Aorta (tissue), 5 donors: ENCODE measurements at regions of chr1 and their contacts with region 1.

Region 1: GRCh38 chr1:246566128-246566812 is at the starts of genes CNST and TFB2M:
- DNase-seq: peak; percentile 99
- ATAC-seq: peak; percentile 100
- H3K4me3 ChIP-seq: peak within 1 kb of the TSS; percentile 71 to 84
- H3K27ac ChIP-seq: peak within 1 kb of the TSS; percentile 3 to 90
- H3K4me1 ChIP-seq: no peaks in the 10 kb centered on the region
- H3K27me3 ChIP-seq: no peaks in the 10 kb centered on the region
- total RNA-seq, gene CNST: 24.5 to 27.8 TPM
- total RNA-seq, gene TFB2M: 5.2 to 5.6 TPM

Region 2: GRCh38 chr1:246632281-246633087 is 66.2 kb after region 1 on chr1:
- intact Hi-C with region 1: loop called in 1 of 2 experiments (anchors 5 kb)
- DNase-seq: no peak
- ATAC-seq: no peak
- H3K4me3 ChIP-seq: no peak overlapping the region
- H3K27ac ChIP-seq: no peak overlapping the region
- H3K4me1 ChIP-seq: no peaks in the 10 kb centered on the region
- H3K27me3 ChIP-seq: no peaks in the 10 kb centered on the region

Region 3: DNA sequence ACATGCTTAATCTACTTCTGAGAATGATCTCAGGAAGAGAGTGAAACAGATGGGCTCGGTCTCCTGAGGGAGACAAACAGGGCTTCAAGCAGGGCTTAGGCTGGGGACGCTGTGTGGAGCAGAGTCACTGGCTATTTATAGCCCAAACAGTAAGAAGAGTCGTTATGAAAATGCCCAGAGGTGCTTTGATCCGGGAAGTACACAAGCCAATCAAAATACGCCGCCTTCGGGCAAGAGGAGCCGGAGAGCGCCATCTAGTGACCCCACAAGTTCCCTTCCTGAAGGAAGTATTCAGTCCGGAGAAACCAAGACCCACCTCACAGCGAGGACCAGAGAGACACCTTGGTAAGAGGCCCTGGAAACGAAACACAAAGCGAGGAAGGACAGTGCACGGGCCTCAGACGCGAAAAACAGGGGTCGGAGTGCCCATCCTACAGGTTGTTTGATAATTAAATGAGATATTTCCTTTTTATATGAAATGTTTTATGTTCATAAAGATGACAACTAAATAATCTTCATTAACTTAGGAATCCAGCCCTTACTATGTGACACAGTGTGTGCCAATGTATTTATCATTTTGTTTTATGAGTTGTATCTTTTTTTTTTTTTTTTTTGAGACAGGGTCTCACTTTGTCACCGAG is 132.9 kb after region 1 on chr1:
- intact Hi-C with region 1: loop called (anchors 10 kb)
- DNase-seq: peak; percentile 89 to 90
- ATAC-seq: peak; percentile 90
- H3K4me3 ChIP-seq: no peak overlapping the region
- H3K27ac ChIP-seq: no peak overlapping the region
- H3K4me1 ChIP-seq: no peaks in the 10 kb centered on the region
- H3K27me3 ChIP-seq: no peaks in the 10 kb centered on the region

Region 4: DNA sequence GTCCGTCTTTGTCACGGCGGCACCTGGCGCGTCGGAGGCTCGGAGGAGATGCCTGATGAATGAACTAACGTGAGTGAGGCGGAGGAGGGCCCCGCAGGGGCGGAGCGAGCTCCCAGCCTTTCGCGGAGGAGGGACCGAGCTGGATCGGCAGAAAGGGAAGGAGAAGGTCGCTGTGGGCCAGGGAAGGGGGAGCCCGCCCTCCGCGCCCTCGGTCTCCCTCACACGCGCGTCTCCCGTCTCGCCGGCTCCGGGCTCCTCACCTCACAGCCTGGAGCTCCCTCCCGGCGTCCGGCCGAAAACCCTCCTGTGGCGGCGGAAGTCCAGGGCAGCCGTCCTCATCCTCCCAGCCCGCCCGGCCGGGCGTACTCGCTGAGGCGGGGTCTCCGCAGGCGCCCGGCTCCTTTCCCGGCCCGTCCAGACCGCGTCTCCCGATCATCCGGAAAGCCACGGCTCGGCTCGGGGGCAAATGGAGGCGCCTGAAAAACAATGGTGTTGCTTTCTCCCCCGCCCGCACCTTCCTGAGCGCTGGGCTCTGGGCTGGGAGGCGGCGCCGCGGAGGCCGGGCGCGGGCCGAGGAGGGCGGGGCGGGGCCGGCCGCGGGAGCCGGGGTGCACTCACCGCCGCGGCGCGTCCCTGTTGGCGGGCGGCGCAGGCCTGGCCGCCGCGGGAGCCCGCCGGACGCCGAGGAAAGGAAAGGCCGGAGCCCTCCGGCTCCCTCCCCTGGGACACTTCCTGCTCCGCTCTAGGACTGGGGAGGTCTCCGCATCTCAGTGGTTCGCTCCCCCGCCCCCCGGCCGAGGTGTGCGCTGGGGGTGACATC is 765.1 kb after region 1 on chr1 and contains the start of gene ZNF496:
- intact Hi-C with region 1: loop called in 1 of 2 experiments (anchors 10 kb)
- DNase-seq: peak; percentile 88 to 92
- ATAC-seq: peak; percentile 83
- H3K4me3 ChIP-seq: peak within 1 kb of the TSS; percentile 91 to 93
- H3K27ac ChIP-seq: peak within 1 kb of the TSS; percentile 54 to 87
- H3K4me1 ChIP-seq: no peaks in the 10 kb centered on the region
- H3K27me3 ChIP-seq: no peaks in the 10 kb centered on the region
- total RNA-seq, gene ZNF496: 23.1 to 29.0 TPM